Spleen (tissue), 13 donors: ENCODE measurements at regions of chr16 and their contacts with region 1.

Region 1: GRCh38 chr16:86072328-86073102 is 173.6 kb downstream of the IRF8 start:
- DNase-seq: peak; percentile 71
- H3K4me3 ChIP-seq: no peak overlapping the region
- H3K27ac ChIP-seq: no peak overlapping the region
- H3K4me1 ChIP-seq: peaks cover 0 to 44% (median 15%) of the 10 kb centered on the region in 6 donors
- H3K27me3 ChIP-seq: peaks cover 0 to 57% (median 0%) of the 10 kb centered on the region in 7 donors
- CTCF ChIP-seq: peak in 10 of 11 experiments; percentile 10 to 82 (median 70)
- POLR2A ChIP-seq: no peak

Region 2: DNA sequence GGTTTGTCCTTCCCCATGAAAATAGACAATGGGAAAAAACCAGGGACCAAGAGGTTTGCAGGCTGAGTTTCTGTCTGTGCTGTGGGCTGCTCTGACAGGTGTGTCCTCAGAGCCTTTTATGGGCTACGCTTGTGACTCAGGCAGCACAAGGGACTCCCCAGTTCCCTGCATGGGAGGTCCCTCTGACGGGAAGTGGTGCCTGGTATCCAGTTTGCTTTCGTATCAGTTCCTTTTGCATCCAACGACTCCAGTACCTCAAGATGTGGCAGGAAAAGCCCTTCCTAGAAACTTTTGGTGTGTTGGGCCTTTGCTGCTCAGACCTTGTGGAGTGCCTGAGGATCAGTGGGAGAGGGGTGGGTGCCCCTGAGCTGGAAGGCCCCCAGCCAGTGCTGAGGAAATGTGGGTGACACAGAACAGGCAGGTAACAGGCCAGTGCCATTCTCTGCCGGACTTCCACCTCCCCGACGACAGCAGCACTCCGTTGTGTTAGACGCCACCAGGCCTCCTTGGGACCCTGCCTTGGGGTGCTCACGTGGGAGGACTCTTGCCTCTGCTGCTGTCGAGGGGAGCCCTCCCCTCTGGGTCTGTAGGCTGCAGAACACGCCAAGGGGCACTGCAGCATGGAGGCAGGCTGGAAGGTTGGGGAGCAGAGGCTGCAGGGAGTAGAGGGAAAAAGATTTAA is 212.0 kb before region 1 on chr16:
- intact Hi-C with region 1: no loop called
- DNase-seq: peak; percentile 70
- H3K4me3 ChIP-seq: no peak overlapping the region
- H3K27ac ChIP-seq: no peak overlapping the region
- H3K4me1 ChIP-seq: peaks cover 0 to 31% (median 7%) of the 10 kb centered on the region in 6 donors
- H3K27me3 ChIP-seq: peaks cover 0 to 3% (median 0%) of the 10 kb centered on the region in 7 donors
- CTCF ChIP-seq: no peak
- POLR2A ChIP-seq: no peak

Region 3: DNA sequence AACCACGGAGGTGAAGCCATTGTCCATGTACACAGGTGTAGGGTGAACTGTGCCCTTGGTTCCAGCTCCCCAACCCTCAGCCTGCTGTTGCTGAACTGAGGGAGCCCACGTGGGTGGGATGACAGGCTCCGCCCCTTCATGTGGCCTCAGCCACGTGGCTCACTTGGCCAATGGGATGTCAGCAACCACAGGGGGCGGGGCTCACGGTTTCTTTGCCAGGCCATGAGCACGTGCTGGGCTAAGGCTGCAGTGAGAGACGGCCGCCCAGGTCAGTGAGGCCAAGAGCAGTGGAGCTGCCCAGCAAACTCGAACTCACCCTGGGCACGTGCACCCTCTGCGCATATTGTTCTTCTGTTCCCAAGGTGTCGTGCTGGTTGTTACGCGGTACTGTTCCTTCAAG is 109.0 kb after region 1 on chr16:
- intact Hi-C with region 1: no loop called
- DNase-seq: no peak
- H3K4me3 ChIP-seq: no peak overlapping the region
- H3K27ac ChIP-seq: no peak overlapping the region
- H3K4me1 ChIP-seq: no peaks in the 10 kb centered on the region
- H3K27me3 ChIP-seq: peaks cover 0 to 28% (median 0%) of the 10 kb centered on the region in 7 donors
- CTCF ChIP-seq: no peak
- POLR2A ChIP-seq: no peak

Region 4: DNA sequence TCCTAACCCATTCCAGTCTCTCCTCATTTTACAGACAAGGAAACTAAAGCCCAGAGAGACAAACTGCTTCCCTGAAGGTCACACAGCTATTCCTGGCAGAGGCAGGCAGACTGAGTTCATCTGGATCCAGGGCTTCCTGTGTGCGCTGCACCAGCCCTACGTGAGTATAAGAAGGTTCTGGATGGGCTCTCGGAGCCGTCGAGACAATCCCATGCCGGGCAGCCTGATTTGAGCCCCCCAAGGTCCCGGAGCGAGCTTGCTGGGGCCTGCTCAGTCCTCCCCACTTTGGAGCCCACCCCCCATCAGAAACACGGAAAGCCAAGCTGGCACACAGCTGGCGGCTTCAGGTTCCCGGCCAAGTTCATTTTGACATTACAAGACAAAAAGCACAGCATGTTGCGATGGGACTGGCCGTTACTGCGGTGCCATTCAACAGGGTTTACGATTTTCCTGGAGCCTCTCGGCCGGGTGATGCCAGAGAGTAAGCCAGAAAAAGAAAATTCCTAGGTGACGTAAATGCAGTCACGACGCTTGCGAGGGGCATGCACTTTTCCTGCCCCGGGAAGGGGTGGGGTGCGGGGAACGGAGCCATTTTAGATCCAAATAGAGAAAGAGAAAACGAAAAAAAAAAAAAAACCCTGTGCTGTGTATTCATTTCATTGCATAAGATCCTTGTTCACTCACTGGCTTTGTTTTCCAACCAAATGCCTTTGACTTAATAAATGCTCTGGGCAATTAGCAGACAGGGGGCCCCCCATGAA is 270.7 kb after region 1 on chr16:
- intact Hi-C with region 1: loop called (anchors 10 kb)
- DNase-seq: no peak
- H3K4me3 ChIP-seq: no peak overlapping the region
- H3K27ac ChIP-seq: peak overlapping the region in 2 of 8 donors; percentile 23 to 45
- H3K4me1 ChIP-seq: peaks cover 0 to 15% (median 0%) of the 10 kb centered on the region in 6 donors
- H3K27me3 ChIP-seq: peaks cover 0 to 82% (median 0%) of the 10 kb centered on the region in 7 donors
- CTCF ChIP-seq: no peak
- POLR2A ChIP-seq: no peak

Region 5: DNA sequence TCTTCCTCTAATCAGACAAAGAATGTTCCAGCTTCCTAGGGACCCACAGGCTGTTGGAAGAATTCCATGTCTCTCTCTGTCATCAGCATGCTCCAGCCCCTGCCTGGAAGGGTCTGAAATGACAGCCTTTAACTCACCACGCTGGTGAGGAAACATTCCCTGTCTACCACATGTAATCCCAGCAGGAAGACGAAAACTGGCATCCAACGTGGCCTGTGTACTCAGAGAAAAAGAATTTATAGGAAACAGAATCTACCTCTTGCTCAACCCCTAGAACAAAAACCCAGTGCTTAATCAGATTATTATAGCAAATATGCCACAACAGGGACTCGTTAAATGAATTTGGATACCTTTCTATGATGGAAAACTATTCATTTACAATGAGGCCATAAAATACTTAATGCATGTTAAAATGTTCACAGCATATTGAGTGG is 290.6 kb after region 1 on chr16:
- intact Hi-C with region 1: no loop called
- DNase-seq: no peak
- H3K4me3 ChIP-seq: no peak overlapping the region
- H3K27ac ChIP-seq: no peak overlapping the region
- H3K4me1 ChIP-seq: no peaks in the 10 kb centered on the region
- H3K27me3 ChIP-seq: peaks cover 0 to 80% (median 0%) of the 10 kb centered on the region in 7 donors
- CTCF ChIP-seq: no peak
- POLR2A ChIP-seq: no peak